GM10248 (cell line): ENCODE measurements at regions of chr20 and their contacts with region 1.

Region 1: DNA sequence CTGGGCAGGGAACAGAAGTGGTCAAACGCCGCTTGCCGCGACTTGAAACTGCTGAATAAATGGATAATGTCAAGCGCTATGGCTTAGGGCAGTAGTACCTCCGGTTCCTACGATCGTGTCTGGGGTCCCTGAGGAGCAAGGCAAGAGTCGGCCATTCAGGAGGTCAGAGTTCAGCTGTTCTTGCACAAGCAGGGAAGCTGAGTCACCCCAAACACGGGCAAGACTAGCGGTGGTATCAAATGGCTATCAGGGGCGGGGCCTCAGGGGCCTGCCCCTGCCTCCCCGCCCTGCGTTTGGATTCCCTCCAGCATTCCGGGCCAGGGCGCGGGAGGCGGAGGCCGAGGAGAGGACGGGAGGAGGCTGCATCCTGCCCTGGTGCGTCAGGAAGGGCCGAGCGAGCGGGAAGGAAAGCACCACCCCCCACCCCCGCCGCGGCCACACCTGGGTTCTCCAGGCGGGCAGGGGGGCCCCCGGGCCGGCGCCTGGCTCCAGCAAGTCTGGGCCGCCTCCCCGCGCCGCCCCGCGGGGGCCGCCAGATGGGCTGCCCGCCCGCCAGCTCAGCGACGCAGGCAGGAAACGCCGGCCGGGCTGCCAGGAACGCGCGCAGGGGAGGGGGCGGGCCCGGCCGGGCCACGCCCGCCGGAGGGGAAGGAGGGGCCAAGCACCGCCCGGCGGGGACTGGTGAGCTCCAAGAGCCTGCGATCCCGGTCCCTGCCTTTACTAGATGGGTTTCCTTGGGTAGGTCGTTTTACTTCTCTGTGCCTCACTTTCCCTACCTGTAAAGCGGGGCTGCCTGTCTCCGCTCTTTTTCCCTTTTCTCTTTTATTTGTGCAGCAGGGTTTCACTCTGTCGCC is 32.2 kb upstream of the ID1 start:
- DNase-seq: peak; percentile 93
- CTCF ChIP-seq: no peak

Region 2: GRCh38 chr20:31523361-31524283 is 49.3 kb before region 1 on chr20:
- CTCF ChIA-PET with region 1: no interaction called
- POLR2A ChIA-PET with region 1: no interaction called
- DNase-seq: no peak
- CTCF ChIP-seq: no peak

Region 3: GRCh38 chr20:31547017-31547675 is 25.8 kb before region 1 on chr20:
- CTCF ChIA-PET with region 1: interaction called, 260 read pairs
- POLR2A ChIA-PET with region 1: interaction called, 3 read pairs
- DNase-seq: peak; percentile 85
- CTCF ChIP-seq: no peak

Region 4: DNA sequence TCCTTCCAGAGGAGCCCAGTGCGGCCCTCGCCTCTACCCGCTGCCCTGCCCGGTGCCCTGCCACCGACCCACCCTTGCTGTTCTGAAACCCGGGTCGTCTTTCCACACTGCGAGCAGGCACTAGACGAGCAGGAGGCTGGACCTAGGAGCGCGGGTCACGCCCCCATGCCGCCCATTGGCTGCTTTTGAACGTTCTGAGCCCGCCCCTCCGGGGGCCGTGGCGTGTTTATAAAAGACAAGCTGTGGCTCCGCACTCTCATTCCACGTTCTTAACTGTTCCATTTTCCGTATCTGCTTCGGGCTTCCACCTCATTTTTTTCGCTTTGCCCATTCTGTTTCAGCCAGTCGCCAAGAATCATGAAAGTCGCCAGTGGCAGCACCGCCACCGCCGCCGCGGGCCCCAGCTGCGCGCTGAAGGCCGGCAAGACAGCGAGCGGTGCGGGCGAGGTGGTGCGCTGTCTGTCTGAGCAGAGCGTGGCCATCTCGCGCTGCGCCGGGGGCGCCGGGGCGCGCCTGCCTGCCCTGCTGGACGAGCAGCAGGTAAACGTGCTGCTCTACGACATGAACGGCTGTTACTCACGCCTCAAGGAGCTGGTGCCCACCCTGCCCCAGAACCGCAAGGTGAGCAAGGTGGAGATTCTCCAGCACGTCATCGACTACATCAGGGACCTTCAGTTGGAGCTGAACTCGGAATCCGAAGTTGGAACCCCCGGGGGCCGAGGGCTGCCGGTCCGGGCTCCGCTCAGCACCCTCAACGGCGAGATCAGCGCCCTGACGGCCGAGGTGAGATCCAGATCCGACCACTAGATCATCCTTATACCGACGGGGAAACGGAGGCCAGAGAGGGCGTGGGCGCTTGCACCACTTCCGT is 32.3 kb after region 1 on chr20 and contains the start of gene ID1:
- CTCF ChIA-PET with region 1: interaction called, 371 read pairs
- POLR2A ChIA-PET with region 1: interaction called, 7 read pairs
- DNase-seq: peak; percentile 91
- CTCF ChIP-seq: no peak